ENCODE measurements at regions of chr16 and their contacts with region 1.

Region 1: GRCh38 chr16:30052671-30053372 is 12.7 kb upstream of the ALDOA start:
- DNase-seq: peak; percentile 80 to 88 (median 82)
- H3K4me3 ChIP-seq: peak overlapping the region; percentile 23 to 64
- H3K4me3 Mint-ChIP-seq: peak overlapping the region; percentile 84 to 93 (median 87)
- H3K27ac ChIP-seq: no peak overlapping the region
- H3K27ac Mint-ChIP-seq: peak overlapping the region in 6 of 7 donors; percentile 53 to 94 (median 79)
- H3K4me1 ChIP-seq: peaks cover 21% of the 10 kb centered on the region
- H3K4me1 Mint-ChIP-seq: peaks cover 10 to 31% (median 23%) of the 10 kb centered on the region in 4 donors
- H3K27me3 ChIP-seq: no peaks in the 10 kb centered on the region
- H3K27me3 Mint-ChIP-seq: no peaks in the 10 kb centered on the region

Region 2: DNA sequence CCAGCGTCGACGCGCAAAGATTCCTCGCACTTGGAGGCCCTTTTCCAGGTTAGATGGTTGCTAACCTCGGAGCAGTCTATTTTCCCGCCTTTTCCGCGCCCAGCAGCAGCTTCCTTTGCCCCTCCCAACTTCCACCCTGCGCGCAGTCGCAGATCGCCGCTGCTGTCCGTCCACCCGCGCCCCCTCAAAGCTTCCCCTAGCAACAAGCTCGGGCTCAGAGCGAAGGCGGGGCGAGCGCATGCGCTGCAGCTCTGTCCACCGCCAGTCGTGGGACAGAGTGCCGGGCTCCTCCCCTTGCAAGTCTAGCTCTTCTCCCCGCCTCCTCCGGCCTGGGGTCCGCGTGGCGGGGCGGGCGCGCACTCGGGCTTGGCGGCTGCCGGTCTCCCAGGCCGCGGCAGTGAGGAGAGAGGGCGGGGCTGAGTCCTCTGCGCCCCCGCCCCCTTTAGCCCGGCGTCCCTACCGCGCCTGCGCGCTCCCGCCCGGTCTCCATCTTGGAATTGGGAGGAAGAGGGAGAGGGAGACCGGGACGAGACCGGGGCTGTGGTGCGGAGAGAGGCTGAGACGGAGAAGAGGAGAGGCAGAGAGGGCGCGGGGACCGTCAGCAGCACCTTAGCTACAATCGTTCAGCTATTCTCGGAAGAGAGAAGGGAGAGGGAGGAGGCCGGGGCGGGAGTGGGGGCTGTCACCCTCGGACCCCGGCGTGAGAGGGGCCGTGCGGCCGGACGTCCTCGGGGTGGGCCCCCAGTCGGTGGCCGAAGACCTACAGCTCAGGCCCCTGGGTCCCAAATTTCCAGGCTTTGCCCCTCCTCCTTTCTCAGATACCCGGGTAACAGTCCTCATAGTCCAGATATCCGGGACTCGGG is 79.2 kb before region 1 on chr16 and contains the start of gene TAOK2:
- CTCF ChIA-PET with region 1: no interaction called
- POLR2A ChIA-PET with region 1: no interaction called
- intact Hi-C with region 1: no loop called
- DNase-seq: peak; percentile 92 to 94 (median 92)
- H3K4me3 ChIP-seq: peak within 1 kb of the TSS; percentile 74 to 87
- H3K4me3 Mint-ChIP-seq: peak within 1 kb of the TSS; percentile 82 to 97 (median 93)
- H3K27ac ChIP-seq: peak within 1 kb of the TSS; percentile 86
- H3K27ac Mint-ChIP-seq: peak within 1 kb of the TSS; percentile 77 to 97 (median 96)
- H3K4me1 ChIP-seq: peaks cover 36% of the 10 kb centered on the region
- H3K4me1 Mint-ChIP-seq: peaks cover 20 to 49% (median 34%) of the 10 kb centered on the region in 4 donors
- H3K27me3 ChIP-seq: no peaks in the 10 kb centered on the region
- H3K27me3 Mint-ChIP-seq: no peaks in the 10 kb centered on the region
- total RNA-seq, gene TAOK2: 53.8 to 56.0 TPM

Region 3: GRCh38 chr16:30032083-30032819 is 20.6 kb before region 1 on chr16:
- CTCF ChIA-PET with region 1: interaction called, 21 read pairs
- POLR2A ChIA-PET with region 1: no interaction called
- intact Hi-C with region 1: no loop called
- DNase-seq: peak; percentile 61 to 70 (median 66)
- H3K4me3 ChIP-seq: no peak overlapping the region
- H3K4me3 Mint-ChIP-seq: peak overlapping the region in 5 of 8 donors; percentile 35 to 76 (median 43)
- H3K27ac ChIP-seq: no peak overlapping the region
- H3K27ac Mint-ChIP-seq: peak overlapping the region in 1 of 7 donors; percentile 48
- H3K4me1 ChIP-seq: peaks cover 5% of the 10 kb centered on the region
- H3K4me1 Mint-ChIP-seq: peaks cover 4 to 18% (median 4%) of the 10 kb centered on the region in 4 donors
- H3K27me3 ChIP-seq: peaks cover 18% of the 10 kb centered on the region
- H3K27me3 Mint-ChIP-seq: peaks cover 26 to 37% of the 10 kb centered on the region in 2 donors

Region 4: DNA sequence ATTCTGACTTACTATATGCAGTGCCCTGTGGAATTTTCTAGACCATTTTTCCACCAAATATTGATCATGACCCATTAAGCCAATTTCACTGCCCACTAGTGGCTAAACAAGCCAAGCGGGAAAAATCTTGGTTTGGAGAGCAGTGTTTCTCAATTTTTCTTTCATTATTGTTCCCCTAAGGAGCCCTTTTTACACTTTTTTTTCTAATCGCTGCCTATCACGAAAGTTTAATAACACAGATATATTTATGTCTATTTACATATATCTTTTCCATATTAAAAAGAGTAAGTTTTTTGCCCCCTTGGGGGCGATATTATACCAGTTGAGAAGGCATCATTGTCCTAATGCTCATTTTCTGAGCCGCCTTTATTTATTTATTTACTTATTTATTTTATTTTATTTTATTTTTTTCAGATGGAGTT is 11.0 kb before region 1 on chr16:
- CTCF ChIA-PET with region 1: interaction called, 26 read pairs
- POLR2A ChIA-PET with region 1: no interaction called
- intact Hi-C with region 1: no loop called
- DNase-seq: peak in 3 of 5 donors; percentile 26 to 39 (median 38)
- H3K4me3 ChIP-seq: no peak overlapping the region
- H3K4me3 Mint-ChIP-seq: no peak overlapping the region
- H3K27ac ChIP-seq: no peak overlapping the region
- H3K27ac Mint-ChIP-seq: no peak overlapping the region
- H3K4me1 ChIP-seq: no peaks in the 10 kb centered on the region
- H3K4me1 Mint-ChIP-seq: peaks cover 0 to 5% (median 2%) of the 10 kb centered on the region in 4 donors
- H3K27me3 ChIP-seq: no peaks in the 10 kb centered on the region
- H3K27me3 Mint-ChIP-seq: peaks cover 0 to 5% of the 10 kb centered on the region in 2 donors

Region 5: DNA sequence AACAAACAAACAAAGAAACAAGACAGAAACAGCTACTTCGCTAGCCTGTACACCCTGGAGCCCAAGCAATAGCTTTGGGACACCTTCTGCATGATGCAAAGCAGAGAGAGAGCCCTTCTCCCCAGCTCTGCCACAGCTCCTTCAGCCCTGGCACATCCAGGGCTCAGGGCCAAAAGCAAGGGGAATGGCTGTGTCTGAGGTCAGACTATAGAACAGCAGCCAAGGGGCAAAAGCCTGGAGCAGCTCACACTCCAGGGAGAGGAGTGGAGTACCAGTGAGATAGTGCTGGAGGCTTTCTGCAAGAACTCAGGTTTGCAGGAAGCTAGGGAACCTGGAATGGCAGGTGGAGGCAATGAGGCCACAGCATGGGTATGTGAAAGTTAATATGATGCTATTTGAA is 404.4 kb after region 1 on chr16:
- CTCF ChIA-PET with region 1: no interaction called
- POLR2A ChIA-PET with region 1: no interaction called
- intact Hi-C with region 1: no loop called
- DNase-seq: no peak
- H3K4me3 ChIP-seq: no peak overlapping the region
- H3K4me3 Mint-ChIP-seq: peak overlapping the region in 2 of 8 donors; percentile 39 to 62
- H3K27ac ChIP-seq: no peak overlapping the region
- H3K27ac Mint-ChIP-seq: peak overlapping the region in 6 of 7 donors; percentile 24 to 89 (median 56)
- H3K4me1 ChIP-seq: peaks cover 35% of the 10 kb centered on the region
- H3K4me1 Mint-ChIP-seq: peaks cover 18 to 49% (median 31%) of the 10 kb centered on the region in 4 donors
- H3K27me3 ChIP-seq: no peaks in the 10 kb centered on the region
- H3K27me3 Mint-ChIP-seq: no peaks in the 10 kb centered on the region